ENCODE measurements at regions of chr17 and their contacts with region 1.

Region 1: DNA sequence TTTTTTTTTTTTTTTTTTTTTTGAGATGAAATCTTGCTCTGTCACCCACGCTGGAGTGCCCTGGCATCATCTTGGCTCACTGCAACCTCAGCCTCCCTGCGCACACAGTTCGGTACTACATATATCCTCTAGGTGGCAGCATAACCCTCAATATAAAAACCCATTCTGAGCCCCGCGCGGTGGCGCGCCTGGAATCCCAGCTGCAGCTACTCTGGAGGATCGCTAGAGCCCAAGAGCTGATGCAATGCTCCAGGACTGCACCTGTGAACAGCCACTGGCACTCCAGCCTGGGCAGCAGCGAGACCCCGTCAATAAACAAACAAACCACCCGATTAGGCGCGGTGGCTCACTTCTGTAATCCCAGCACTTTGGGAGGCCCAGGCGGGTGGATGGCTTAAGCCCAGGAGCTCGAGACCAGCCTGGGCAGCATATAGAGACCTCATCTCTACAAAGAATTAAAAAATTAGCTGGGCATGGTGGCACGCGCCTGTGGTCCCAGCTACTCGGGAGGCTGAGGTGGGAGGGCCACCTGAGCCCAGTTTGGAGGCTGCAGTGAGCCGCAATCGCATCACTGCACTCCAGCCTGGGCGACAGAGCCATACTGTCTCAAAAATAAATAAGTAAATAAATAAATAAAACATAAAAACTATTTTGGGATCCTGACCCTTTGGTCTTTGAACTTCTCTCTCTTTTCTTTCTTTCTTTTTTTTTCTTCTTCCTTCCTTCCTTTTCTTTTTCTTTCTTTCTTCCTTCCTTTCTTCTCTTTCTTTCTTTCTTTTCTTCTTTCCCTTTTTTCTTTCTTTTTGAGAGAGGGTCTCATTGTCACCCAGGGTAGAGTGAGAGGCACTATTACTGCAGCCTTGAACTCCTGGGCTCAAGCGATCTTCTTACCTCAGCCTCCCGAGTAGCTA is 15.4 kb upstream of the AKAP10 start:
- DNase-seq: peak; percentile 88
- ATAC-seq: peak; percentile 100
- H3K4me3 Mint-ChIP-seq: no peak overlapping the region
- H3K27ac Mint-ChIP-seq: no peak overlapping the region
- H3K4me1 Mint-ChIP-seq: peaks cover 6% of the 10 kb centered on the region
- H3K27me3 Mint-ChIP-seq: peaks cover 2% of the 10 kb centered on the region

Region 2: DNA sequence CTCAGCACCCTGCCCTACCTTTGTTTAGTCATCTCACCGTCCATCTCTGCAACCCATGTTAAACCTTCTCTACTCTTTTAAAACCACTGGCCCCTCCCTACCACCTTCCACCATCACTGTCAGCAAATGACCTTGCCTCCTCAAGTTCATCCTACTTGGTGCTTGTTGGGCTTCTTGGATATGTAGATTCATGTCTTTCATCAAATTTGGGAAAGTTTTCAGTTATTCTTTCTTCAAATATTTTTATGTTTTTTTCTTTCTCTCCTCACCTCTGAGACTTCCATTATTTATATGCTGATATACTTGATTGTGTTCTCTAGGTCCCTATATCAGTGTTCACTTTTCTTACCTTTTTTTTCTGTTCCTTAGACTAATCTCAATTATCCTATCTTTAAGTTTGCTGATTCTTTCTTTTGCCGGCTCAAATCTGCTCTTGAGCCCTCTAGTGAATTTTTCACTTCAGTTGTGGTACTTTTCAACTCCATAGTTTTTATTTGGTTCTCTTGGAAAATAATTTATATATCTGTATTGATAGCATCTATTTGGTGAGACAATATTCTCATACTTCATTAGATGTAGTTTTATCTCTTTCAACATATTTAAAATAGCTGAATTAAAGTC is 373.2 kb before region 1 on chr17:
- CTCF ChIA-PET with region 1: no interaction called
- POLR2A ChIA-PET with region 1: no interaction called
- intact Hi-C with region 1: no loop called
- DNase-seq: no peak
- ATAC-seq: no peak
- H3K4me3 Mint-ChIP-seq: no peak overlapping the region
- H3K27ac Mint-ChIP-seq: no peak overlapping the region
- H3K4me1 Mint-ChIP-seq: no peaks in the 10 kb centered on the region
- H3K27me3 Mint-ChIP-seq: peaks cover 2% of the 10 kb centered on the region

Region 3: DNA sequence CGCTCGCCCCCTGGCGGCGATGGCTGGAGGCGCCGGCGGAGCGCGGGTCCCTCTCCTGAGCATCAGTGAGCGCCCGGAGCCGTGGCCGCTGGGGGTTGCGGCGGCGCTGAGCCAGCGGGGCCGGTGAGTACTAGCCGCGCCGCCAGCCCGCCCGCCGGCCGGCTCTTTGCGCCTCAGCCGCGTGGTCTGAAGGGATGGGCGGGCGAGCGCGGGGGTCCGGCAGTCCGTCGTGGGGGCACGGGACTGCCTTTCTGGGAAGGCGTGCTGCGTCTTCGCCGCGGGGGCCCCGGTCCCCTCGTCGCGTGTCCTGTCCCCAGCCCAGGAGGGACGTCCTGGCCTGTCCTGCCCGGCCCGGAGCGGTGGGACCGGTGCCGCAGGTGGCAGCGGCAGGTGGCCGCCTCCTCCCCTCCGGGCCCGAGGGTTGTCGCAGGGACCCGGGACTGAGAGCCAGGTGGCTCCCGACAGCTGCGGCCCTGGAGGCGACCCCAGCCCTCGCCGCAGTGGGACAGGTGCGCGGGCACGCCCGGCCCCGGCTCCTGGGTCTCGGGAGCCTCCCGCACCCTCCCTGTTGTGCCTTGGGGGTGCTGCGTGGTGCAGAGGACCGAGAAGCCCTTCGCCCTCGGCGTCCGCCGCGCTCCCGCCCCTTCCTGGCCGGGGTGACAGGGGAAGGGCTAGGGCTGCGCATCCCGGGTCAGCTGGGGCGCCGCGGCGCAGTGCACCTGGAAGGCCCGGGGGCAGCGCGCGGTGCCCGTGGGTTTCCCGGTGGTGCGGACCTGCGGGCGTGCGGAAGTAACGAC is 16.4 kb after region 1 on chr17 and contains the start of gene SPECC1:
- CTCF ChIA-PET with region 1: interaction called, 23 read pairs
- POLR2A ChIA-PET with region 1: no interaction called
- intact Hi-C with region 1: loop called in 1 of 2 experiments (anchors 1 kb)
- DNase-seq: peak; percentile 92
- ATAC-seq: peak; percentile 99
- H3K4me3 Mint-ChIP-seq: peak within 1 kb of the TSS; percentile 77
- H3K27ac Mint-ChIP-seq: peak within 1 kb of the TSS; percentile 17
- H3K4me1 Mint-ChIP-seq: peaks cover 11% of the 10 kb centered on the region
- H3K27me3 Mint-ChIP-seq: peaks cover 37% of the 10 kb centered on the region
- total RNA-seq, gene SPECC1: 6.1 to 10.4 TPM

Region 4: DNA sequence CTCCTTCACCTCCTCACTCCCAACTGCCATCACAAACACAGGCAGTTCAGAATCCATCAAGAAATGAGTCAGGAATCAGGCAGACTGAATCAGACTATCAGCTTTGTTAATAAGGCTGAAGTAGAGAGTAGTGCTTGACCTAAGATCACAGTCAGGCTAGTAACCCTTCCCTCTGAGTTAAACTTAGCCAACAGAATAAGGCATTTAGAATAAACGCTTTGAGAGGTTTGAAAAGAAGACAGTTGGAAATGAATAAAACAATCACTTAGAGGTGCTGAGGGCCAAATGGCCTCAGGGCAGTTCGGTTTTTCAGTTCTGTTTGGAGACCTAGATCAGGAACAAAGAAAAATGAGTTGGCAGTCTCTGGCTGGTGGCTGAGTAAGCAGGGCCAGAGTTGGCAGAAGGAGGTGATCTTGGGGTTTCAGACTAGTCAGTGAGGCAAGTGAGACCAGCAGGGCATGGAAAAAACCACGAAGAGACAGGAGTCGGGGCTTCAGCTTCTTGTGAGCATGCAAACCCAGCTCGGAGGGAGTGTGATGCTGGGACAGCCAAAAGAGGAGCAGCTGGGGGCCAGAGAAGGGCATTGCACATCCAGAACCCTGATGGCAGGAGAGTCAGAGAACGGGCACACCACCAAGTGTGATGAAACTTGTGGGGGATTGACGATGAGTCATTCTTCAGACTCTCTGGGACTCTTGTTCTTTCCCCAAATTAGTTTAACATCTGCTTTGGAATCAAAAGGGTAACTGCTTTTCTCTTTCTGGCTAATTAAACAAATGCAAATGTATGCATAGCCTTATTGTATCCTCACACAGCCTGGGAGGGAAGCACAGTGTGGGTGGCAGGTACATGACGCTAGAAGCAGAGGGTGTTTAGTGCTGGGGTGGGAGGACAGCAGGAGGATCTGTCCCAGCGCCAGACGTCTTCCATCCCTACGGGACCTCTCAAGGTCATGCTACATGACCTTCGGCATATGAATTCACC is 70.9 kb after region 1 on chr17:
- CTCF ChIA-PET with region 1: no interaction called
- POLR2A ChIA-PET with region 1: no interaction called
- intact Hi-C with region 1: no loop called
- DNase-seq: peak; percentile 52
- ATAC-seq: peak; percentile 85
- H3K4me3 Mint-ChIP-seq: no peak overlapping the region
- H3K27ac Mint-ChIP-seq: peak overlapping the region; percentile 64
- H3K4me1 Mint-ChIP-seq: peaks cover 14% of the 10 kb centered on the region
- H3K27me3 Mint-ChIP-seq: no peaks in the 10 kb centered on the region

Region 5: GRCh38 chr17:20074489-20074888 is 81.4 kb after region 1 on chr17:
- CTCF ChIA-PET with region 1: interaction called, 10 read pairs
- POLR2A ChIA-PET with region 1: no interaction called
- intact Hi-C with region 1: no loop called
- DNase-seq: no peak
- ATAC-seq: no peak
- H3K4me3 Mint-ChIP-seq: no peak overlapping the region
- H3K27ac Mint-ChIP-seq: no peak overlapping the region
- H3K4me1 Mint-ChIP-seq: peaks cover 26% of the 10 kb centered on the region
- H3K27me3 Mint-ChIP-seq: no peaks in the 10 kb centered on the region

Region 6: GRCh38 chr17:20121359-20122253 is 128.5 kb after region 1 on chr17:
- CTCF ChIA-PET with region 1: interaction called, 39 read pairs
- POLR2A ChIA-PET with region 1: no interaction called
- intact Hi-C with region 1: loop called (anchors 1 kb)
- DNase-seq: peak; percentile 82
- ATAC-seq: peak; percentile 72
- H3K4me3 Mint-ChIP-seq: no peak overlapping the region
- H3K27ac Mint-ChIP-seq: no peak overlapping the region
- H3K4me1 Mint-ChIP-seq: no peaks in the 10 kb centered on the region
- H3K27me3 Mint-ChIP-seq: no peaks in the 10 kb centered on the region

Region 7: DNA sequence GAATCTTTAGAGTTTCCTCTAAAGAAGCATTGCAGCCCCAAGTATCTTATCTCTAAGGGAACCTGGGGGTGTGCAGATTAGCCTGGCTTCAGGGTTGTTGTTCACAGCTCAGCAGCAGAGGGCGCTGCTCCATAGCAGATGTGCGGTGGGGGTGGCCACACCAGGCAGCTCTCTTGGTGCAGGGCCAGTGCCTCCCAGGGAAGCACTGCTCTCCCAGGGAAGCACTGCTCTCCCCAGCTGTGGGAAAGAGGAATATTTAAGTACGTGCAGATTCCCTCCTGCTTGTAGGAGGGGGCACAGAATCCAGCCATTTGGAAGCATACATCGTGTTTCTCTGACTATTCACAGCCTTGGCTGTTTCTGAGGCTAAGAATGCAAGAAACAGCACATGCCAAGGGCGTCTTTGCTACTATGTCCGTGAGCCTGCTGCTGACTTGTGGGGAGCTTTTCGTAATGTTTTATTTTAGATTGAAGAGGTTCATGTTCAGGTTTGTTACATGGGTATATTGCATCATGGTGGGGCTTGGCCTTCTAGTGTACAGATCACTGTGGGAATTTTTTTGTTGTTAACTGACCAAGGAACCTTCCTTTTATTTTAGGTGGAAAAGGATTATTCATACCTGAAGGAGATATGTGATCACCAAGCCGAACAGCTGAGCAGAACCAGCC is 233.9 kb after region 1 on chr17:
- CTCF ChIA-PET with region 1: no interaction called
- POLR2A ChIA-PET with region 1: no interaction called
- intact Hi-C with region 1: loop called (anchors 2 to 10 kb)
- DNase-seq: peak; percentile 90
- ATAC-seq: peak; percentile 97
- H3K4me3 Mint-ChIP-seq: no peak overlapping the region
- H3K27ac Mint-ChIP-seq: peak overlapping the region; percentile 9
- H3K4me1 Mint-ChIP-seq: peaks cover 26% of the 10 kb centered on the region
- H3K27me3 Mint-ChIP-seq: no peaks in the 10 kb centered on the region

Region 8: DNA sequence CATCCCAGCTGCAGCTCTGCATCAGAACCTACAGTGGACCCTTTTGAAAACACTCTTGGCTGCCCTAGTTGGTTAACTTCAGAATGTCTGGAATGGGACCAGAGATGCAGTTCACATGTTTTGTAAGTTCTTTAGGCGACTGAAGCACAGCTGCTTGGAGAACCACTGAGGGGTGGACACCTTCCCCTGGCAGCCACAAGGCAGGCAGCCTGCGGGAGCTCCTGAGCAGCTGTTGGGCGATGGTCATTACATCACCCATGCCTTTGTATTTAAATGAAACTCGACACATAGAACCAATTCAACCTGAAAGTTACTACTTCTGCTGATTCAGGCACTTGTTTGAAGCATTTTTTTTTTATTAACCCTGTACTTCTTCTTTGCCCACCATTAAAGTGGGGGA is 322.8 kb after region 1 on chr17:
- CTCF ChIA-PET with region 1: no interaction called
- POLR2A ChIA-PET with region 1: no interaction called
- intact Hi-C with region 1: loop called (anchors 5 kb)
- DNase-seq: no peak
- ATAC-seq: no peak
- H3K4me3 Mint-ChIP-seq: no peak overlapping the region
- H3K27ac Mint-ChIP-seq: no peak overlapping the region
- H3K4me1 Mint-ChIP-seq: peaks cover 2% of the 10 kb centered on the region
- H3K27me3 Mint-ChIP-seq: peaks cover 2% of the 10 kb centered on the region

Measured in activated CD4-positive, alpha-beta T cell treated with anti-CD3 and anti-CD28 coated beads for 36 hours (primary cell).